Activated CD4-positive, alpha-beta T cell treated with anti-CD3 and anti-CD28 coated beads, Interleukin-2, amount 10 ng/mL, durations not matched to agents 24 days and 14 days (primary cell): ENCODE measurements at regions of chr7 and their contacts with region 1.

Region 1: DNA sequence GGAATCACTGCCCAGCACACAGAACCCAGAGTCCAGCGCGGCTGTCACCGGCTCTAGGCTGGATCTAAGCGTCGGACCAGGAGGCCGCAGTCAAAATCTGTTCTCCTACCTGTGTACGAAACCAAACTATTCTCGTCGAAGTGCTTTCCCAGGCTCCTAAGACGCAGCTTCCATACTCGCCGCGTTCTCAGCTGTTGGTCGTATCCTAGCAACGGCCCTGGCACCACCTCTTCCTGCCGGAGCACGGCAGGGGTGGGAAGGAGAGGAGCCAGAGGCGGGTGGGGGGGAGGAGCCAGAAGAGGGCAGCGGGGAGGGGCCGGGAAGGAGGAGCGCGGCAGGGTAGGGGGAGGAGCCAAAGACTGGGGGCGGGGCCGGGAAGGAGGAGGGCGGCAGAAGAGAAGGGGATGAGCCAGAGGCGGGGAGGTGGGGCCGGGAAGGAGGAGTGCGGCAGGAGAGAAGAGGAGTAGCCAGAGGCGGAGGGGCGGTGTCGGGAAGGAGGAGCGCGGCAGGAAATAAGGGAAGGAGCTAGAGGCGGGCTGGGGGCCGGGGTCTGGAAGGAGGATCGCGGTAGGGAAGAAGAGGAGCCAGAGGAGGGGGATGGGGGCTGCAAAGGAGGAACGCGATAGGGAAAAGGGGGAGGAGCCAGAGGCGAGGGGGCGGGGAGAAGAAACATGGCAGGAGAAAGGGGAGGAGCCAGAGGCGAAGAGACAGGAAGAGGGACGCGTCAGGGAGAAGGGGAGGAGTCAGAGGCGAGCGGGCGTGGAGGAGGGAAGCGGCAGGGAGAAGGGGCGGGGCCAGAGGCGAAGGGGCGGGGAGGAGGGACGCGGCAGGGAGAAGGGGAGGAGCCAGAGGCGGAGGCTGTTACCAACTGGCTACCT is at the start of gene IQUB:
- DNase-seq: peak; percentile 97
- H3K4me3 Mint-ChIP-seq: peak within 1 kb of the TSS; percentile 97
- H3K27ac Mint-ChIP-seq: peak within 1 kb of the TSS; percentile 90
- H3K4me1 Mint-ChIP-seq: peaks cover 22% of the 10 kb centered on the region
- H3K27me3 Mint-ChIP-seq: peaks cover 29% of the 10 kb centered on the region
- total RNA-seq, gene IQUB: 0.05 TPM in 1 of 2 replicates, not detected in the other

Region 2: GRCh38 chr7:123319911-123320310 is 214.7 kb before region 1 on chr7:
- intact Hi-C with region 1: no loop called
- DNase-seq: no peak
- H3K4me3 Mint-ChIP-seq: no peak overlapping the region
- H3K27ac Mint-ChIP-seq: no peak overlapping the region
- H3K4me1 Mint-ChIP-seq: no peaks in the 10 kb centered on the region
- H3K27me3 Mint-ChIP-seq: no peaks in the 10 kb centered on the region

Region 3: DNA sequence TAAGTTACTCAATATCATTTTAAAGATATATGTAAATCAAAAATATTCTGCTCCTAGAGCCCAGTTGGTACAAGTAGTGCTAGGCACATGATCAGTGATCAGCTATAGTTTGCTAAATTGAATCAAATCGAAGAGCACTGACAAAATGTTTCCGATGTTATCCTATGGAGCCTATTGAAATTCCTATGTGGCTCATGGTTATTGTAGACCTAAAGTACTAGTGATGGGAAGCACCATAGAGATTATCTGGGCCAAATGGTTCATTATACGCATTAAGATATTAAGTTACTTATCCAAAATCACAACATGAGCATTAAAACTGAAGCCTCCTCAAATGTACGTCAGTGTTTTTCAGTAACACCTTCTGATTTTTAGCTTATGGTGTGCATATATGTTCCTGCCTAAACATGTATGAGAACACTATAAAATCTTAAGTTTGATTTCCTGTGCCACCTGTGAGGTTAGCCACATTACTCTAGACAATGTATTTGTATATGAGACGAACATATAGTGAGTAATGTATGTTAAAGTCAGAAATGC is 103.5 kb before region 1 on chr7:
- intact Hi-C with region 1: no loop called
- DNase-seq: no peak
- H3K4me3 Mint-ChIP-seq: no peak overlapping the region
- H3K27ac Mint-ChIP-seq: no peak overlapping the region
- H3K4me1 Mint-ChIP-seq: no peaks in the 10 kb centered on the region
- H3K27me3 Mint-ChIP-seq: no peaks in the 10 kb centered on the region

Region 4: DNA sequence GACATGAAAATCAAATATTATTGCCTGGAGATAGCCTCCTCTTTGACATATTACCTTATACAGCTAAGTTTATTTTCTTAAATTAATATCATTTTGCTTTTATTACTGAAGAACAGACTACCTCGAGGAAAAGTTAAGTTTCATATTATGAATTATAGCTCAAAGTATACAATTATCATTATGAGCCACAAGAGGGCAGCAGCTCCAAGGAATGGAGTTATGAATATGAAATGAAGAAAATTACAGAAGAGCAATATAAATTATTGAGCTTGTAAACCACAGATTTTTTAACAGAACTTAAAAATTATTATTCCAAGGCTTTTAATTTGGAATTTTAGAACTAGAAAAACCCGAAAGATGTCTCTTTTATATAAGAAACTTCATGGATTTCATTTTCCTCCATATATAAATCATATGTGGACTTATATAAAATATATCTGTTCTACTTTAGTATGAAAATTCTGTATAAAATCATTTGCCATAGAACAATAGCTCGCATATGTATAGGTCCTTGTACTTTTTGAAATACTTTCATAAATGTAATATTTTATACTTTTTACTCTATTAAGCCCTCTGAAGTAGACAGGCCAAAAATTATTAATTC is 40.3 kb before region 1 on chr7:
- intact Hi-C with region 1: loop called (anchors 1 kb)
- DNase-seq: peak; percentile 73
- H3K4me3 Mint-ChIP-seq: no peak overlapping the region
- H3K27ac Mint-ChIP-seq: no peak overlapping the region
- H3K4me1 Mint-ChIP-seq: no peaks in the 10 kb centered on the region
- H3K27me3 Mint-ChIP-seq: peaks cover 6% of the 10 kb centered on the region

Region 5: DNA sequence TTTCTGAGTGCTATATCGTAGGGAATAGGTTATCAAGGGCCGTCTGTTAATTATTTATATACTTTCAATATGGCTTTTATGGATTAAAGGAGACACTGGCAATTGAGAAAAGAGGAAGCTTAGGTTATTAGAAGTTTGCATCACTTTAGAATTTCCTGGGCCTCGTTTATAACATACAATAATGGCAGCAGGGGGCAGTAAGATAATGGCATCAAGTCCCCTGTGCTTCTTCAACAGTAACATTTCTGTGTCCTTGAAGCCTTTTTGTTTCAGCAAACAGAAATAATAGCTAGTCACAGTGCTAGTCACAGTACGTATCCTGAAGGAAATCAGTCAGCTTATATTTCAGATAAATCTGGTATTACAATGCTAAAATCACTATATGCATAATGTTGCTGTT is 432.3 kb after region 1 on chr7:
- intact Hi-C with region 1: no loop called
- DNase-seq: no peak
- H3K4me3 Mint-ChIP-seq: no peak overlapping the region
- H3K27ac Mint-ChIP-seq: no peak overlapping the region
- H3K4me1 Mint-ChIP-seq: no peaks in the 10 kb centered on the region
- H3K27me3 Mint-ChIP-seq: no peaks in the 10 kb centered on the region